Colonic mucosa (tissue), 4 donors: ENCODE measurements at regions of chr17 and their contacts with region 1.

Region 1: GRCh38 chr17:64420143-64420971 is 28.6 kb upstream of the MILR1 start:
- DNase-seq: peak; percentile 39
- H3K4me3 ChIP-seq: no peak overlapping the region
- H3K27ac ChIP-seq: no peak overlapping the region
- H3K4me1 ChIP-seq: no peaks in the 10 kb centered on the region
- H3K27me3 ChIP-seq: no peaks in the 10 kb centered on the region
- CTCF ChIP-seq: peak; percentile 77

Region 2: DNA sequence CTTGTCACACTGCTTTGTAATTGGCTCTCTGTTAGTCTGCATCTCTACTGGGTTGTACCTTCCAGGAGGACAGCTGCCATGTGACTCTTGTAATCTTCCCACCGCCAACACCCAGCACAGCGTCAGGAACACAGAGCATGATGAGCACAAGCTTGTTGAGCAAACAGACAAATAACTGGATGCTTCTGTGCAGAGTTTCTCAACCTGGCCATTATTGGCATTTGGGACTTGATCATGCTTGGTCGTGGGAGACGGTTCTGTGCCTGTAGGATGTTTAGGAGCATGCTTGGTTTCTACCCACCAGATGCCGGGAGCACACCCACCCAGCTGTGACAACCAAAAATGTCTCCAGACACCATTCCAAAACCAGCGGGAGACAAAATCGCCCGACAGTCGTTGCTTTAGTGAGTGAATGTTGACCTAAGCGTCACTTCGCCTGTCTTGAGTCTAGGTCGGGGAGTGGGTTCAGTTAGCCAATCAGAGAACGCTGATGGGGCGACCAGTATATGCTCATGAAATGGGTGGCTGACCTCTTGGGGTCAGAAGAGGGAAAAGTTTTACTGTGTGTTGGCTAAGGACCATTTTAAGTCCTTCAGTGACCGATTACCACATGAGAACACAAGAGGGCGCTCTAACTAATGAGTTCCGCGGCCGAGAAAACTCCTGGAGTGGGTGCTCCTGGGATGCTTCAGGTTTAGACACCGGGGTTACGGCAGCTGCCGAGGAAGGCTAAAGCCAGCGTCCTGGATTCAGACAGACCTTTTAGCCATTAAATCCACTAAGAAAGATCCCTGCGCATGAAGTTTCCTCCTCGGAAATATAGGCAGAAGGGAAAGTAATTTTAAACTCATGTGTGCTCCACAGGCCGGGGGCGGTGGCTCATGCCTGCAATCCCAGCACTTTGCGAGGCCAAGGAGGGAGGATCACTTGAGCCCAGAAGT is 99.5 kb before region 1 on chr17:
- intact Hi-C with region 1: loop called (anchors 2 kb)
- DNase-seq: peak; percentile 66
- H3K4me3 ChIP-seq: no peak overlapping the region
- H3K27ac ChIP-seq: no peak overlapping the region
- H3K4me1 ChIP-seq: no peaks in the 10 kb centered on the region
- H3K27me3 ChIP-seq: no peaks in the 10 kb centered on the region
- CTCF ChIP-seq: peak; percentile 73

Region 3: GRCh38 chr17:64331946-64332493 is 88.3 kb before region 1 on chr17:
- intact Hi-C with region 1: no loop called
- DNase-seq: no peak
- H3K4me3 ChIP-seq: no peak overlapping the region
- H3K27ac ChIP-seq: no peak overlapping the region
- H3K4me1 ChIP-seq: no peaks in the 10 kb centered on the region
- H3K27me3 ChIP-seq: no peaks in the 10 kb centered on the region
- CTCF ChIP-seq: no peak

Region 4: GRCh38 chr17:64466019-64466685 is 45.8 kb after region 1 on chr17:
- intact Hi-C with region 1: no loop called
- DNase-seq: no peak
- H3K4me3 ChIP-seq: no peak overlapping the region
- H3K27ac ChIP-seq: no peak overlapping the region
- H3K4me1 ChIP-seq: no peaks in the 10 kb centered on the region
- H3K27me3 ChIP-seq: no peaks in the 10 kb centered on the region
- CTCF ChIP-seq: no peak

Region 5: GRCh38 chr17:64491034-64491859 is 70.9 kb after region 1 on chr17:
- intact Hi-C with region 1: loop called (anchors 2 kb)
- DNase-seq: peak; percentile 53
- H3K4me3 ChIP-seq: no peak overlapping the region
- H3K27ac ChIP-seq: no peak overlapping the region
- H3K4me1 ChIP-seq: peaks cover 5% of the 10 kb centered on the region
- H3K27me3 ChIP-seq: no peaks in the 10 kb centered on the region
- CTCF ChIP-seq: peak; percentile 60

Region 6: GRCh38 chr17:64622931-64623654 is 202.7 kb after region 1 on chr17:
- intact Hi-C with region 1: no loop called
- DNase-seq: no peak
- H3K4me3 ChIP-seq: no peak overlapping the region
- H3K27ac ChIP-seq: no peak overlapping the region
- H3K4me1 ChIP-seq: peaks cover 6% of the 10 kb centered on the region
- H3K27me3 ChIP-seq: no peaks in the 10 kb centered on the region
- CTCF ChIP-seq: no peak